Tibial artery (tissue), 4 donors: ENCODE measurements at regions of chr13 and their contacts with region 1.

Region 1: DNA sequence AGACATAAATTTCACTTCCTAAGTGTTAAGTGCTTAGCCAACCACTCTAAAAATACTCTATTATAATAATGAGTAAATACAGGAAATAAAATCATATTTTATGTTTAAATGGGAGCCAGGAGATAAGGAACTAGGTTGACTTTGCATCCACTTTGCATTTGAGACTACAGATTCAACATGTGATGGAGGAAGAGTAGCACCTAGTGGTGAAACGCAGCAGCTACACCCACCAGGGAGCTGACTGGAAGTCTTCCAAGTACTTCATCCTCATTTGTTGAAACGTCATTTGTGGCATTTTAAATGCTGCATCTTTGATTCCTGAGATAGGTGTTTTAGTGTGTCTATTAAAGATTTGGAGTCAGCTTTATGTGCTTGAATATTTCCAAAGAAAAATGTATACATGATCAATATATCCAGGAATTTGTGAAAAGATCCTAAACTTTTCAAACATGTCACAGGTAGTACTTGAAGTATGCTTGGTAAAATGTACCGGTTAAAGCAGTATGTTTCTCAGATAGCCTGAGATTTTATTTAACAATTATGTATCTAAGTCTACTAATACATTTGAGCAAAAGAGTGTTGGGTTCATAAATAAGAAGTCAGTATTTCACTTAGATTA is 17.4 kb upstream of the KCTD12 start:
- DNase-seq: peak; percentile 69 to 80
- H3K4me3 ChIP-seq: no peak overlapping the region
- H3K27ac ChIP-seq: no peak overlapping the region
- H3K4me1 ChIP-seq: no peaks in the 10 kb centered on the region
- H3K27me3 ChIP-seq: no peaks in the 10 kb centered on the region
- CTCF ChIP-seq: peak; percentile 85 to 97

Region 2: GRCh38 chr13:76461999-76462398 is 441.7 kb before region 1 on chr13:
- intact Hi-C with region 1: loop called (anchors 10 kb)
- DNase-seq: no peak
- H3K4me3 ChIP-seq: no peak overlapping the region
- H3K27ac ChIP-seq: no peak overlapping the region
- H3K4me1 ChIP-seq: no peaks in the 10 kb centered on the region
- H3K27me3 ChIP-seq: no peaks in the 10 kb centered on the region
- CTCF ChIP-seq: no peak

Region 3: DNA sequence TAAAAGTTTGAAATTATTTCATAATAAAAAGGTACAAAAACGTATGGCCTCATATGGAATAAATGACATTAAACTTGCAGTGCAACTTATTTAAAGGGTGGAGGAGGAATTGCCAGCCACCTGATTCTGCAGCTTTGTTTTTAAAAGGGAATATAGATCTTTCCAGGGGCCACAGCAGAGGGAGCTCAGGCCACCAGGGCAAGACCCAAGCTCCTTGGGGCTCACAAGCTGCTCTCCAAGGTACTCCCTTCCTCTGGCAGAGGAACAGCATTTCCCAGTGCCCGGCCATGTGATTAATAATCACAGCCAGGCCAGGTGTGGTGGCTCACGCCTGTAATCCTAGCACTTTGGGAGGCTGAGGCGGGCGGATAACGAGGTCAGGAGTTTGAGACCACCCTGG is 50.9 kb after region 1 on chr13:
- intact Hi-C with region 1: no loop called
- DNase-seq: no peak
- H3K4me3 ChIP-seq: no peak overlapping the region
- H3K27ac ChIP-seq: no peak overlapping the region
- H3K4me1 ChIP-seq: no peaks in the 10 kb centered on the region
- H3K27me3 ChIP-seq: peaks cover 0 to 2% of the 10 kb centered on the region in 2 donors
- CTCF ChIP-seq: no peak

Region 4: GRCh38 chr13:77113496-77113895 is 209.8 kb after region 1 on chr13:
- intact Hi-C with region 1: no loop called
- DNase-seq: no peak
- H3K4me3 ChIP-seq: no peak overlapping the region
- H3K27ac ChIP-seq: no peak overlapping the region
- H3K4me1 ChIP-seq: no peaks in the 10 kb centered on the region
- H3K27me3 ChIP-seq: no peaks in the 10 kb centered on the region
- CTCF ChIP-seq: no peak